Sciatic nerve (tissue), 2 donors: ENCODE measurements at regions of chr7 and their contacts with region 1.

Region 1: DNA sequence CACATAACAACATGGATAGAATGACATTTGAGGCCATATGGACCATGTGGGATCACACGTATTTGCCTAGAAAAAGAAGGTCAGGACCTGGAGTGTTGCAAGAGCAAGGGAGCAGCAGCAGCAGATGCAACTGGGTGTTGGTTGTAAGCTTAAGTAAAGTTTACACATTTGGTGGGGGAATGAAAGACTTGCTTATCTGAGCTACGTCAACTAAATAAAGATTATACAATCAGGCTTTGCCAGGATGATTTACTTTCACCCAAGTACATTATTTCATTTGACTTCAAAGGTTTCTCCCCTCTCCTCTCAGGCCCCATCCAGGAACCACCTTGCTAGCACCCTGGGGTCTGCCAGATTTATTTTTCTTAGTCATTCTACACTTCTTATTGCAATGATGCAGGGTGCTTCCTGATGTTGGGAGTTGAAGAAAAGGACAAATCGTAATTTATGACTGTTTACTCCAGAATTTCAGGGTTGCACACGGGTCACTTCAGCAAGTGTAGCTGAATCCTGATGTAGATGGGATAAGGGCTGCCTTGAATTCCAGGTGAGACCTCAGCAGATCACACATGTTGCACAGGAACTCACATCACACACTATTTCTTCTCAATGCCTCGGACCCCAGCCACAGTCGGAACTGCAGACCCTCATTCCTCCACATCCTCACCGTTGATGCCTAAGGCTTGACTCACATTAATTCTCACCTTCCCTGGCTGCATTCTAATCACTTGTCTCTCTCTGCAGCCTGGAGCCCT is 592.0 kb upstream of the IGFBP3 start:
- DNase-seq: no peak
- ATAC-seq: no peak

Region 2: GRCh38 chr7:45196374-45196773 is 1316.7 kb before region 1 on chr7:
- intact Hi-C with region 1: loop called (anchors 5 kb)
- DNase-seq: no peak
- ATAC-seq: no peak

Region 3: DNA sequence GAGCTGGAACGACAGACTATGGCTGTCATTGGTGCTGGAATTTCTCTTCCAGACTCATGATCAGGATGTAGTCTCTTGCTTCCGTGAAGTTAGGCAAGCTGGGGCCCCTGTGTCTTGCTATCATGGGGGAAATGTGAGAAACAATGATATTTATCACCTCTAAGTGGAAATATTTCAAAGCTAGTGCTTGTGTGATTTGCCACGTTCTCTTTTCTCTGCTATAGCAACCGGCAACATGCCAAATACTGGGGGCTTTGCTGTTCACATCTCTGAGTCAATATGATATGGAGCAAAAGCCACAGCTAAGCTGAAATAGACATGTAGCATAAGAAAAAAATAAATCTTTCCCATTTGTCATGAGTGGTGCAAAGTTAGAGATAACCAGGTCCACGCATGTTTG is 76.2 kb after region 1 on chr7:
- intact Hi-C with region 1: no loop called
- DNase-seq: no peak
- ATAC-seq: no peak